ENCODE measurements at regions of chr19 and their contacts with region 1.

Region 1: GRCh38 chr19:7340959-7341837 is 7.5 kb upstream of the ARHGEF18 start:
- DNase-seq: peak; percentile 69
- H3K4me3 ChIP-seq: no peak overlapping the region
- H3K27ac ChIP-seq: no peak overlapping the region
- H3K4me1 ChIP-seq: no peaks in the 10 kb centered on the region
- H3K27me3 ChIP-seq: peaks cover 5% of the 10 kb centered on the region; the same call in 1 of the 2 replicates

Region 2: GRCh38 chr19:7104747-7105447 is 236.3 kb before region 1 on chr19:
- in situ Hi-C with region 1: loop called (anchors 25 kb)
- DNase-seq: no peak
- H3K4me3 ChIP-seq: no peak overlapping the region
- H3K27ac ChIP-seq: no peak overlapping the region
- H3K4me1 ChIP-seq: no peaks in the 10 kb centered on the region; the same call in 1 of the 2 replicates
- H3K27me3 ChIP-seq: no peaks in the 10 kb centered on the region

Measured in GM23248 (cell line).